ENCODE measurements at regions of chr17 and their contacts with region 1.

Region 1: GRCh38 chr17:6831661-6832263 is at the start of gene TEKT1:
- DNase-seq: peak; percentile 53 to 82 (median 68)
- ATAC-seq: peak; percentile 95
- H3K4me3 ChIP-seq: peak within 1 kb of the TSS; percentile 30
- H3K4me3 Mint-ChIP-seq: peak within 1 kb of the TSS; percentile 73 to 91 (median 85)
- H3K27ac ChIP-seq: no peak within 1 kb of the TSS
- H3K27ac Mint-ChIP-seq: peak within 1 kb of the TSS in 6 of 9 donors; percentile 62 to 94 (median 80)
- H3K4me1 ChIP-seq: no peaks in the 10 kb centered on the region
- H3K4me1 Mint-ChIP-seq: peaks cover 7 to 20% (median 14%) of the 10 kb centered on the region in 7 donors
- H3K27me3 ChIP-seq: peaks cover 22% of the 10 kb centered on the region in 2 donors
- H3K27me3 Mint-ChIP-seq: peaks cover 48 to 73% (median 58%) of the 10 kb centered on the region in 5 donors
- total RNA-seq, gene TEKT1: not detected

Region 2: GRCh38 chr17:6800422-6801027 is 31.2 kb before region 1 on chr17:
- CTCF ChIA-PET with region 1: no interaction called
- POLR2A ChIA-PET with region 1: no interaction called
- intact Hi-C with region 1: loop called in 1 of 2 experiments (anchors 1 kb)
- DNase-seq: no peak
- ATAC-seq: no peak
- H3K4me3 ChIP-seq: no peak overlapping the region
- H3K4me3 Mint-ChIP-seq: no peak overlapping the region
- H3K27ac ChIP-seq: no peak overlapping the region
- H3K27ac Mint-ChIP-seq: no peak overlapping the region
- H3K4me1 ChIP-seq: no peaks in the 10 kb centered on the region
- H3K4me1 Mint-ChIP-seq: no peaks in the 10 kb centered on the region
- H3K27me3 ChIP-seq: no peaks in the 10 kb centered on the region
- H3K27me3 Mint-ChIP-seq: peaks cover 0 to 29% (median 0%) of the 10 kb centered on the region in 5 donors

Region 3: GRCh38 chr17:6894206-6894528 is 62.4 kb after region 1 on chr17:
- CTCF ChIA-PET with region 1: no interaction called
- POLR2A ChIA-PET with region 1: no interaction called
- intact Hi-C with region 1: no loop called
- DNase-seq: peak in 2 of 9 donors; percentile 5 to 33
- ATAC-seq: no peak
- H3K4me3 ChIP-seq: no peak overlapping the region
- H3K4me3 Mint-ChIP-seq: peak overlapping the region in 2 of 10 donors; percentile 31 to 48
- H3K27ac ChIP-seq: no peak overlapping the region
- H3K27ac Mint-ChIP-seq: no peak overlapping the region
- H3K4me1 ChIP-seq: no peaks in the 10 kb centered on the region
- H3K4me1 Mint-ChIP-seq: no peaks in the 10 kb centered on the region
- H3K27me3 ChIP-seq: no peaks in the 10 kb centered on the region
- H3K27me3 Mint-ChIP-seq: peaks cover 32 to 59% (median 48%) of the 10 kb centered on the region in 5 donors

Measured in naive thymus-derived CD4-positive, alpha-beta T cell (primary cell).